CD4-positive, alpha-beta T cell (primary cell): ENCODE measurements at regions of chr14 and their contacts with region 1.

Region 1: GRCh38 chr14:102591889-102592763 is at the start of gene RCOR1:
- DNase-seq: peak; percentile 97 to 99 (median 98)
- ATAC-seq: peak; percentile 88
- H3K4me3 ChIP-seq: peak within 1 kb of the TSS; percentile 77
- H3K4me3 Mint-ChIP-seq: peak within 1 kb of the TSS; percentile 99
- H3K27ac ChIP-seq: peak within 1 kb of the TSS; percentile 86 to 88
- H3K27ac Mint-ChIP-seq: peak within 1 kb of the TSS; percentile 95
- H3K4me1 ChIP-seq: peaks cover 25% of the 10 kb centered on the region
- H3K4me1 Mint-ChIP-seq: peaks cover 30% of the 10 kb centered on the region
- H3K27me3 ChIP-seq: no peaks in the 10 kb centered on the region
- H3K27me3 Mint-ChIP-seq: no peaks in the 10 kb centered on the region
- CTCF ChIP-seq: no peak
- total RNA-seq, gene RCOR1: 20.5 to 23.1 TPM

Region 2: GRCh38 chr14:102362545-102363181 is 229.5 kb before region 1 on chr14 and contains the starts of genes CINP and TECPR2:
- CTCF ChIA-PET with region 1: no interaction called
- POLR2A ChIA-PET with region 1: no interaction called
- intact Hi-C with region 1: loop called in 1 of 2 experiments (anchors 2 kb)
- DNase-seq: peak; percentile 92 to 99 (median 96)
- ATAC-seq: peak; percentile 90
- H3K4me3 ChIP-seq: peak within 1 kb of the TSS; percentile 91
- H3K4me3 Mint-ChIP-seq: peak within 1 kb of the TSS; percentile 94
- H3K27ac ChIP-seq: peak within 1 kb of the TSS; percentile 74 to 89
- H3K27ac Mint-ChIP-seq: no peak within 1 kb of the TSS
- H3K4me1 ChIP-seq: peaks cover 27% of the 10 kb centered on the region
- H3K4me1 Mint-ChIP-seq: peaks cover 21% of the 10 kb centered on the region
- H3K27me3 ChIP-seq: no peaks in the 10 kb centered on the region
- H3K27me3 Mint-ChIP-seq: no peaks in the 10 kb centered on the region
- CTCF ChIP-seq: no peak
- total RNA-seq, gene CINP: 12.6 to 14.5 TPM
- total RNA-seq, gene TECPR2: 5.0 to 5.4 TPM

Region 3: DNA sequence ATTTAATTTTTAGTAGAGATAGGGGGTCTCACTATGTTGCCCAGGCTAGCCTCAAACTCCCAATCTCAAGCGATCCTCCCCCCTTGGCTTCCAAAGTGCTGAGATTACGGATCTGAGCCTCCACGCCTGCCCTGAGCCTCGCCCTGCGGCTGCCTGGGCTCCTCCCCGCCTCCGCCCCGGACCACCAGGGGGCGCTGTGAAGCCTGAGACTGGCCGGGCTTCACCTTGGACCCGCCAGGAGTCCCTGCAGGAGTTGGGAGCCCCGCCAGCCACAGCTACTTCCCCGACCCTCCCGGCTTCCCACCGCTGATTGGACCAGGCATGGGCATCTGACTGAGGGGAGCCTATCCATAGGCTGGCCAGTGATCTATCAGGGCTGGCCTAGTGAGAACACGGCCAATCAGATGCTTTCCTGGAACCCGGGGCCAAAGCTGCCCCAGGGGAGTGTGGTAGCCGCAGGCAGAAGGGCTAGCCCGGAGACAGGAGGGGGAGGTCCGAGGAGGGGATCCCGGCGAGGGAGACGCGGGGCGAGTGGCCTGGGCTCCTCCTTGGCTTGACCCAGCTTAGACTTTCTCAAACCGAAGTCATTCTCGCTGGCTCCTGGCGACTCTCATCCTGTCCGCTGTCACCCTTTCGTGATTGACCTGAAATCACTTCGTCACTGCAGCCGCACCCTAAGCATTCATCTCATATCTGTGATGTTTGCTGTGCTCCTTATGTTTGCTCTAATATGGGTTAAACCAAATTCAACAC is 67.5 kb before region 1 on chr14:
- CTCF ChIA-PET with region 1: interaction called, 14 read pairs
- POLR2A ChIA-PET with region 1: interaction called, 9 read pairs
- intact Hi-C with region 1: loop called (anchors 1 to 2 kb)
- DNase-seq: peak; percentile 81 to 95 (median 88)
- ATAC-seq: peak; percentile 83
- H3K4me3 ChIP-seq: peak overlapping the region; percentile 70
- H3K4me3 Mint-ChIP-seq: peak overlapping the region; percentile 83
- H3K27ac ChIP-seq: peak overlapping the region; percentile 54 to 56
- H3K27ac Mint-ChIP-seq: peak overlapping the region; percentile 78
- H3K4me1 ChIP-seq: peaks cover 28% of the 10 kb centered on the region
- H3K4me1 Mint-ChIP-seq: peaks cover 32% of the 10 kb centered on the region
- H3K27me3 ChIP-seq: no peaks in the 10 kb centered on the region
- H3K27me3 Mint-ChIP-seq: no peaks in the 10 kb centered on the region
- CTCF ChIP-seq: peak; percentile 97

Region 4: DNA sequence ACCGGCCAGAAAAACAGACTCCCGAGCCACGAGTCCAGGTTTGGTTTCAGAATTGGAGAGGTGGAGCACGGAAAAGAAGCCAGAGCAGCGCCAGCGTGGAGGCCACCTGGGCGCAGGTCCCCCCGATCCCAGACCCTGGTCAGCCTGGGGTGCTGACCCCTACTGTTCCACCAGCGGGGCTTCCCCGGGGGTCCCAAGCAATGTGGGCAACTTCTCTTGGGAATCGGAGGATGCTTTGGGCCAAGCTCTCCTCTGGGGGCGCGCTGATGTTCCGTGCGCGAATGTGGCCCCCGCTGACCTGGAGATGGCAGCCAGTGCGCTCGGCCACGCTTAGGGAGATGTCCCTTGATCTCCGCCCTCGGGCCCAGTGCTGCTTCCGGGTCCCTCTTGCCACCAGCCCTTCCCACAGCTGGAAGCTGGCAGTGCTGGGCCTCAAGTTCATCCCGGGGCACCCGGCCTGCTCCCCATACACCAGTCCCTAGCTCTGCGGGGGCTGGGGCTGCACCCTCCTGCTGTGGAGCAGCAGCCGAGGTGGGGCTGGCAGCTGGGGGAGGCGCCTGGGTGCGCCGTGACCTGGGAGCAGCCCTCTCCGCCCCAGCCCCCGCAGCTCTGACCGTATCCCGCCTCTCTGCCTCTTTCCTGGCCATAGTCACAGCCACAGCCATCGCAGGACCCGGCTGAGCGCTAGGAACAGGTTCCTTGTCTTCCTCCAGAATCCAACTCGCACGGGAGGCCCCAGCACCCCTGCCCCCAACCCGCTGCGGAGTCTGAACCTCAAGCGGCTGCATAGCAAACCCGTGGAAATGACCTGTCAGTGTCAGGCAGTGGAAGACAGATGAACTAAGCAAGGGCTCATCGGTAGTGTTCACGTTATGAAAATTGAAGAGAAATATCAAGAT is 91.5 kb after region 1 on chr14:
- CTCF ChIA-PET with region 1: no interaction called
- POLR2A ChIA-PET with region 1: no interaction called
- intact Hi-C with region 1: loop called in 1 of 2 experiments (anchors 5 kb)
- DNase-seq: peak in 1 of 14 experiments; percentile 21
- ATAC-seq: no peak
- H3K4me3 ChIP-seq: no peak overlapping the region
- H3K4me3 Mint-ChIP-seq: no peak overlapping the region
- H3K27ac ChIP-seq: no peak overlapping the region
- H3K27ac Mint-ChIP-seq: no peak overlapping the region
- H3K4me1 ChIP-seq: no peaks in the 10 kb centered on the region
- H3K4me1 Mint-ChIP-seq: peaks cover 23% of the 10 kb centered on the region
- H3K27me3 ChIP-seq: no peaks in the 10 kb centered on the region
- H3K27me3 Mint-ChIP-seq: no peaks in the 10 kb centered on the region
- CTCF ChIP-seq: no peak

Region 5: GRCh38 chr14:102805371-102806246 is 213.5 kb after region 1 on chr14:
- CTCF ChIA-PET with region 1: no interaction called
- POLR2A ChIA-PET with region 1: no interaction called
- intact Hi-C with region 1: no loop called
- DNase-seq: peak in 7 of 14 experiments; percentile 7 to 75 (median 43)
- ATAC-seq: peak; percentile 61
- H3K4me3 ChIP-seq: peak overlapping the region; percentile 24
- H3K4me3 Mint-ChIP-seq: peak overlapping the region; percentile 76
- H3K27ac ChIP-seq: peak overlapping the region; percentile 37 to 43
- H3K27ac Mint-ChIP-seq: peak overlapping the region; percentile 84
- H3K4me1 ChIP-seq: peaks cover 58% of the 10 kb centered on the region
- H3K4me1 Mint-ChIP-seq: peaks cover 68% of the 10 kb centered on the region
- H3K27me3 ChIP-seq: no peaks in the 10 kb centered on the region
- H3K27me3 Mint-ChIP-seq: no peaks in the 10 kb centered on the region
- CTCF ChIP-seq: no peak

Region 6: GRCh38 chr14:102928412-102929240 is 336.5 kb after region 1 on chr14:
- CTCF ChIA-PET with region 1: no interaction called
- POLR2A ChIA-PET with region 1: interaction called, 3 read pairs
- intact Hi-C with region 1: loop called in 1 of 2 experiments (anchors 10 kb)
- DNase-seq: peak; percentile 55 to 92 (median 78)
- ATAC-seq: peak; percentile 86
- H3K4me3 ChIP-seq: peak overlapping the region; percentile 54
- H3K4me3 Mint-ChIP-seq: peak overlapping the region; percentile 73
- H3K27ac ChIP-seq: no peak overlapping the region
- H3K27ac Mint-ChIP-seq: no peak overlapping the region
- H3K4me1 ChIP-seq: peaks cover 39% of the 10 kb centered on the region
- H3K4me1 Mint-ChIP-seq: peaks cover 16% of the 10 kb centered on the region
- H3K27me3 ChIP-seq: peaks cover 44% of the 10 kb centered on the region in 2 experiments
- H3K27me3 Mint-ChIP-seq: peaks cover 27% of the 10 kb centered on the region
- CTCF ChIP-seq: no peak

Region 7: DNA sequence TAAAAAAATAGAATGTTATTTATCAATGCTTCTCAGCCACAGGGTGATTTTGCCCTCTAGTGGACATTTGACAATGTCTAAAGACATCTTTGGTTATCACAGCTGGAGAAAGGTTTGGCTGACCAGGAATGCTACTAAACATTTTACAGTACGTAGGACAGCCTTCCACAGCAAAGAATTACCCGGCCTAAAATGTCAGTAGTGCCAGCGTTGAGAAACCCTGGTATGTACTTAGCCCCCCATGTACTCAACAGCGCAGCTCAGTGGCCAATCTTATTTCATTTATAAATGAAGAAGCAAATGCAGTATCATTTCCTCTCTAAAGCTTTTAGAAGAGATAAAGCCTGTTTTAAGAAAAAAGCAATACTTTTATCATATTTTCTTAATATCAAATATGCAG is 798.9 kb after region 1 on chr14:
- CTCF ChIA-PET with region 1: no interaction called
- POLR2A ChIA-PET with region 1: no interaction called
- intact Hi-C with region 1: loop called in 1 of 2 experiments (anchors 10 kb)
- DNase-seq: peak; percentile 8 to 78 (median 38)
- ATAC-seq: peak; percentile 75
- H3K4me3 ChIP-seq: no peak overlapping the region
- H3K4me3 Mint-ChIP-seq: peak overlapping the region; percentile 72
- H3K27ac ChIP-seq: no peak overlapping the region
- H3K27ac Mint-ChIP-seq: peak overlapping the region; percentile 73
- H3K4me1 ChIP-seq: peaks cover 67% of the 10 kb centered on the region
- H3K4me1 Mint-ChIP-seq: peaks cover 77% of the 10 kb centered on the region
- H3K27me3 ChIP-seq: no peaks in the 10 kb centered on the region
- H3K27me3 Mint-ChIP-seq: no peaks in the 10 kb centered on the region
- CTCF ChIP-seq: peak; percentile 90